Gastrocnemius medialis (tissue), 4 donors: ENCODE measurements at regions of chr20 and their contacts with region 1.

Region 1: GRCh38 chr20:2140561-2140960 is 38.9 kb downstream of the STK35 start:
- DNase-seq: peak; percentile 82 to 92
- ATAC-seq: peak; percentile 97
- H3K4me3 ChIP-seq: no peak overlapping the region
- H3K27ac ChIP-seq: peak overlapping the region; percentile 71 to 83 (median 77)
- H3K4me1 ChIP-seq: peaks cover 39 to 51% of the 10 kb centered on the region in 2 donors
- H3K27me3 ChIP-seq: no peaks in the 10 kb centered on the region
- CTCF ChIP-seq: no peak
- POLR2A ChIP-seq: no peak

Region 2: GRCh38 chr20:1946762-1947534 is 193.6 kb before region 1 on chr20:
- in situ Hi-C with region 1: no loop called
- intact Hi-C with region 1: loop called (anchors 5 kb)
- DNase-seq: peak; percentile 56 to 80
- ATAC-seq: peak; percentile 67
- H3K4me3 ChIP-seq: peak overlapping the region; percentile 32 to 40 (median 37)
- H3K27ac ChIP-seq: peak overlapping the region; percentile 52 to 77 (median 68)
- H3K4me1 ChIP-seq: peaks cover 38 to 44% of the 10 kb centered on the region in 2 donors
- H3K27me3 ChIP-seq: no peaks in the 10 kb centered on the region
- CTCF ChIP-seq: no peak
- POLR2A ChIP-seq: peak in 1 of 2 donors; percentile 30

Region 3: GRCh38 chr20:2172305-2173175 is 32.0 kb after region 1 on chr20:
- in situ Hi-C with region 1: no loop called
- intact Hi-C with region 1: no loop called
- DNase-seq: peak; percentile 37 to 61
- ATAC-seq: peak; percentile 79 to 90
- H3K4me3 ChIP-seq: no peak overlapping the region
- H3K27ac ChIP-seq: no peak overlapping the region
- H3K4me1 ChIP-seq: no peaks in the 10 kb centered on the region
- H3K27me3 ChIP-seq: no peaks in the 10 kb centered on the region
- CTCF ChIP-seq: peak; percentile 84 to 90 (median 89)
- POLR2A ChIP-seq: no peak

Region 4: GRCh38 chr20:2217857-2218539 is 77.4 kb after region 1 on chr20:
- in situ Hi-C with region 1: no loop called
- intact Hi-C with region 1: no loop called
- DNase-seq: peak in 1 of 2 donors; percentile 18
- ATAC-seq: no peak
- H3K4me3 ChIP-seq: no peak overlapping the region
- H3K27ac ChIP-seq: no peak overlapping the region
- H3K4me1 ChIP-seq: no peaks in the 10 kb centered on the region
- H3K27me3 ChIP-seq: no peaks in the 10 kb centered on the region
- CTCF ChIP-seq: no peak
- POLR2A ChIP-seq: no peak